CD4-positive, alpha-beta memory T cell (primary cell): ENCODE measurements at regions of chr1 and their contacts with region 1.

Region 1: GRCh38 chr1:193831465-193831864 is 645.1 kb upstream of the B3GALT2 start:
- DNase-seq: no peak
- H3K4me3 ChIP-seq: no peak overlapping the region
- H3K4me3 Mint-ChIP-seq: no peak overlapping the region
- H3K27ac ChIP-seq: no peak overlapping the region
- H3K27ac Mint-ChIP-seq: peak overlapping the region in 1 of 7 donors; percentile 27
- H3K4me1 ChIP-seq: no peaks in the 10 kb centered on the region
- H3K4me1 Mint-ChIP-seq: no peaks in the 10 kb centered on the region
- H3K27me3 ChIP-seq: no peaks in the 10 kb centered on the region
- H3K27me3 Mint-ChIP-seq: no peaks in the 10 kb centered on the region

Region 2: GRCh38 chr1:193787061-193787460 is 44.4 kb before region 1 on chr1:
- CTCF ChIA-PET with region 1: no interaction called
- POLR2A ChIA-PET with region 1: no interaction called
- intact Hi-C with region 1: loop called (anchors 5 kb)
- DNase-seq: no peak
- H3K4me3 ChIP-seq: no peak overlapping the region
- H3K4me3 Mint-ChIP-seq: no peak overlapping the region
- H3K27ac ChIP-seq: no peak overlapping the region
- H3K27ac Mint-ChIP-seq: no peak overlapping the region
- H3K4me1 ChIP-seq: no peaks in the 10 kb centered on the region
- H3K4me1 Mint-ChIP-seq: peaks cover 0 to 7% (median 1%) of the 10 kb centered on the region in 4 donors
- H3K27me3 ChIP-seq: no peaks in the 10 kb centered on the region
- H3K27me3 Mint-ChIP-seq: no peaks in the 10 kb centered on the region